ENCODE measurements at regions of chr17 and their contacts with region 1.

Region 1: GRCh38 chr17:35119368-35120165 is at the start of gene RAD51D:
- DNase-seq: peak; percentile 86
- H3K4me3 ChIP-seq: peak within 1 kb of the TSS; percentile 92
- H3K27ac ChIP-seq: no peak within 1 kb of the TSS
- H3K4me1 ChIP-seq: peaks cover 8% of the 10 kb centered on the region
- H3K27me3 ChIP-seq: no peaks in the 10 kb centered on the region
- total RNA-seq, gene RAD51D: 2.8 and 9.9 TPM in 2 replicates

Region 2: DNA sequence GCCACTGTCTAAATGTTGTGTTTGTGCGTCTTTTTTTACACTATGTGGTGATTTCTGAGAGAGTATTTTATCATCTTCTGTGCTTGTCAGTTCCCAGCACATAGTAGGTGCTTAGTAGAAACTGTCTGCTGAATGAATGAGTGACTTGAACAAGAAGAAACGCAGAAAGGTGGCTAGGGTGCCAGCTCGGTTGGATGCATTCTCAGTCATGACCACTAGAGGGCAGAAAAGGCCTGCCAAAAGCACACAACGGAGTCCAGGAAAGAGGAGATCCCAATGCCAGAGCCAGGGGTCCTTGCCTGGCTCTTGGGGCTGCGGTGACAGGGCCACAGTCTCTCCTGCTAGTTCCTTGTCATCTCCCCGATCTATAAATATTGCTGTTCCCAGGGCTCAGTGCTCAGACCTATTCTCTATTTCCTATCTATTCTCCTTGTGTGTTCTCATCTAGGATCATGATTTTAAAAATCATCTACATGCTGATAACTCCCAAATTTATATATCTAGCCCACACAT is 699.3 kb before region 1 on chr17:
- in situ Hi-C with region 1: loop called (anchors 25 kb)
- DNase-seq: peak; percentile 56
- H3K4me3 ChIP-seq: no peak overlapping the region
- H3K27ac ChIP-seq: no peak overlapping the region
- H3K4me1 ChIP-seq: no peaks in the 10 kb centered on the region
- H3K27me3 ChIP-seq: peaks cover 28% of the 10 kb centered on the region

Region 3: DNA sequence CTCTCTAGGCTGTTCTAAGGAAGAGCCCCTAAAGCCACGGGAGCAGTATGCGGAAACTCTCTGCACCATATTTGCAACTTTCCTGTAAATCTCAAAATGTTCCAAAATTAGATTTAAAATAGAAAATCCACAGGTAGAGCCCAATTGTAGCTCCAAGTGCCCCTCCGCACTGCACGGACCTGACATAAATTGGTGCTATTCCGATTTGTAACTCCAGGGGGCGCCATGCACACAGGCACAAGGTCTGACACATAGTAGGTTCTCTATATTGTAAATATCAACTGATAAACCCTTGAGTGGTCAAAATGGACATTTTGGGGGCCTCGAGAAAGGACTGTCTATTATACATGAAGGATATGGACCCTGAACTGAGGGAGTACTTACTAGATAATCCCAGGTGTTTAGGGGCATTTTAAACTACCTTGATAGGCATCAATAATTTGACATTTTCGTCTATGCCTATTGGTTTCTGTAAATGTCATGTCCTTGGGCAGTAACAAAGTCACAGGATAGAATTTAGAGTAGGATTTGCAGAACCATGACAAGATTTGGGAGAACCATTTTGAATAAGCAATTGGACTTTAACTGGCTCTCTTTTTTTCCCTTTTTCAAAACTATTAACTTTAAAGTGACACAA is 576.7 kb before region 1 on chr17:
- in situ Hi-C with region 1: loop called (anchors 25 kb)
- DNase-seq: peak; percentile 23
- H3K4me3 ChIP-seq: no peak overlapping the region
- H3K27ac ChIP-seq: no peak overlapping the region
- H3K4me1 ChIP-seq: no peaks in the 10 kb centered on the region
- H3K27me3 ChIP-seq: peaks cover 15% of the 10 kb centered on the region

Region 4: GRCh38 chr17:35011671-35012210 is 107.8 kb before region 1 on chr17:
- in situ Hi-C with region 1: loop called (anchors 5 kb)
- DNase-seq: no peak
- H3K4me3 ChIP-seq: no peak overlapping the region
- H3K27ac ChIP-seq: no peak overlapping the region
- H3K4me1 ChIP-seq: no peaks in the 10 kb centered on the region
- H3K27me3 ChIP-seq: no peaks in the 10 kb centered on the region

Region 5: GRCh38 chr17:35063514-35064223 is 55.9 kb before region 1 on chr17 and contains the start of gene RFFL:
- in situ Hi-C with region 1: no loop called
- DNase-seq: peak; percentile 100
- H3K4me3 ChIP-seq: peak within 1 kb of the TSS; percentile 66
- H3K27ac ChIP-seq: peak within 1 kb of the TSS; percentile 96
- H3K4me1 ChIP-seq: peaks cover 23% of the 10 kb centered on the region
- H3K27me3 ChIP-seq: no peaks in the 10 kb centered on the region
- total RNA-seq, gene RFFL: 7.0 and 9.0 TPM in 2 replicates

Region 6: DNA sequence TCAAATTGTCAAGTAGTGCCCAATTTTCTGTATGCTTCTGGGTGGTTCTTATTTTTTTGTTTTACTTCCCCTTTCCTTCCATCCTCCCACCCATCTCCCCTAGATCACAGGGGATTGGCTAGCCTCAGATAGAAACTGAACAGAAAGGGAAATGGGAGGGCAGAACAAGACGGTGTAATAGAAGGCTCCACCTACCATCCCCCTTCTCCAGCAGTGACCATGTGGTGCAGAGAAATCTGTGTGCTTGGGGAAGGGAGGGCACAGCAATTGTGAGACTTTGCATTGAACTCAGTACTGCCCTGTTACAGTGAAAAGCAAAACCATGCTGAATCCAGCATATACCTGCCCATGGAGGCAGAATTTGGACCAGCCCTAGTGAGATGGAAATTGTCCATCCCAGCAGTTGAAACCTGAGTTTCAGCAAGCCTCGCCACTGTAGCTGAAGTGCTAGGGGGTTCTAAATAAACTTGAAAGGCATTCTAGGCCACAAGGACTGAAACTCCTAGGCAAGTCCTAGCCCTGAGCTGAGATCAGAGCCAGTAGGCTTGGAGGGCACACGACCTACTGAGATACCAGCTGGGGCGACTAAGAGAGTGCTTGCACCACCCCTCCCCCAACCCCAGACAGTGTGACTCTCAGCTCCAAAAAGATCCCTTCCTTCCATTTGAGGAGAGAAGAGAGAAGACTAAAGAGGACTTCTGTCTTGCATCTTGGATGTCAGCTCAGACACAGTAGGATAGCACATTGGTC is 248.7 kb after region 1 on chr17:
- in situ Hi-C with region 1: no loop called
- DNase-seq: no peak
- H3K4me3 ChIP-seq: no peak overlapping the region
- H3K27ac ChIP-seq: no peak overlapping the region
- H3K4me1 ChIP-seq: peaks cover 15% of the 10 kb centered on the region
- H3K27me3 ChIP-seq: no peaks in the 10 kb centered on the region